Activated CD8-positive, alpha-beta T cell treated with anti-CD3 and anti-CD28 coated beads, Interleukin-2, amount 10 ng/mL, durations not matched to agents 7 days and 5 days (primary cell): ENCODE measurements at regions of chr6 and their contacts with region 1.

Region 1: GRCh38 chr6:108039681-108040080 is 34.9 kb downstream of the OSTM1 start:
- DNase-seq: no peak
- ATAC-seq: no peak
- H3K4me3 Mint-ChIP-seq: no peak overlapping the region
- H3K27ac Mint-ChIP-seq: no peak overlapping the region
- H3K4me1 Mint-ChIP-seq: no peaks in the 10 kb centered on the region
- H3K27me3 Mint-ChIP-seq: no peaks in the 10 kb centered on the region

Region 2: DNA sequence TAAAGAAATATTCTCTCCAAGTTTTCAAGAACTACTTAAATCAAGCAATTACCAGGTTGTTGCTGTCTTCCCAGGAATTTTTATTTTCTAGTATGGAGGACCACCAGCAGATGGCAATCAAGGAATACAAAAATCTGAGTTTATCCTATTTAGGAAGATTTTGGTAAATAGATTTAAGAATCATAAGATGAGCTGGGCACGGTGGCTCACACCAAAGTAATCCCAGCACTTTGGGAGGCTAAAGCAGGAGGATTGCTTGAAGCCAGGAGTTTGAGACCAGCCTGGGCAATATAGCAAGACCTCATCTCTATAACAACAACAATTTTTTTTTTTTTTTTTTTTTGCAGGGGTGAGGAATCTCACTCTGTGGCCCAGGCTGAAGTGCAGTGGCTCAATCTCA is 62.4 kb before region 1 on chr6:
- CTCF ChIA-PET with region 1: interaction called, 13 read pairs
- POLR2A ChIA-PET with region 1: no interaction called
- DNase-seq: no peak
- ATAC-seq: no peak
- H3K4me3 Mint-ChIP-seq: no peak overlapping the region
- H3K27ac Mint-ChIP-seq: no peak overlapping the region
- H3K4me1 Mint-ChIP-seq: peaks cover 21% of the 10 kb centered on the region
- H3K27me3 Mint-ChIP-seq: peaks cover 11% of the 10 kb centered on the region

Region 3: DNA sequence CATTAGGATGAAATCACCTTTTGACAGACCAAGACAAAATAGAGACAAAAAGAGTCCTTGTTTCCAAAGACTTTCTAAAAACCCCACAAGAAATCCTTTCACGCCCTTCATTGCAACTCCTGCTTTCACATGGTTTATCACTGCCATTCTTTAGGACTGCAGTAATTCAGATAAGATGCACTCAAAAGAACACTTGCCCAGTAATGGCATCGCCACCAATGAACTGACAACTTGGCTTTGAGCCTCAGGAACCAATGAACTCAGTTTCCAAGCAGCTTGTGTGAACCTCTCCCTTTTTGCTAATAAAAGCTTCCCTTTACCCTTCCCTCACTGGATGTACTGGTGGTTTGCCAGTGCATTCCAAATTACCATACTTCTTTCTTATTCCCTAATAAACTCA is 13.0 kb after region 1 on chr6:
- CTCF ChIA-PET with region 1: interaction called, 19 read pairs
- POLR2A ChIA-PET with region 1: no interaction called
- DNase-seq: no peak
- ATAC-seq: no peak
- H3K4me3 Mint-ChIP-seq: no peak overlapping the region
- H3K27ac Mint-ChIP-seq: no peak overlapping the region
- H3K4me1 Mint-ChIP-seq: no peaks in the 10 kb centered on the region
- H3K27me3 Mint-ChIP-seq: no peaks in the 10 kb centered on the region